Sigmoid colon (tissue), 7 donors: ENCODE measurements at regions of chr5 and their contacts with region 1.

Region 1: DNA sequence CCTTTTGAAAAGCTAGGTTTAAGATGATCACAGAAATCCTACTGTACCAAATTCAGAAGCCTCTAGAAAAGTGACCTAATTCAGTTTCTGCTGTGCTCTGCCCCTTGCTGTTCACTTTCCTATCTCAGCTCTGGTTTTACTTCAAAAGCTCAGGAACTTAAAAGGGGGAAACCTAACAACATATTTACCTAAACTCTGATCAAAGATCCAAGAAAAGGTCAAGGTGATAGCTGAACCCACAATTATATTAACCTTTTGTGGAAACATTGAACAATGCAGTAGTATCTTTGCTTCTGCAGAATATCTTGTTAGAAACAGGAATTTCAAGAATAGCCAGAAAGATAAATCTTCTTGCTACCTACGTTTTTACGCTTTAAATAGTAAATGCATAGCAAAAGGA is 568.5 kb downstream of the PDE4D start:
- DNase-seq: no peak
- H3K4me3 ChIP-seq: no peak overlapping the region
- H3K27ac ChIP-seq: no peak overlapping the region
- H3K4me1 ChIP-seq: peaks cover 0 to 55% (median 39%) of the 10 kb centered on the region in 4 donors
- H3K27me3 ChIP-seq: no peaks in the 10 kb centered on the region
- CTCF ChIP-seq: no peak
- EP300 ChIP-seq: no peak
- POLR2A ChIP-seq: no peak

Region 2: GRCh38 chr5:59312223-59312622 is 12.8 kb before region 1 on chr5:
- intact Hi-C with region 1: no loop called
- DNase-seq: no peak
- H3K4me3 ChIP-seq: no peak overlapping the region
- H3K27ac ChIP-seq: peak overlapping the region in 1 of 4 donors; percentile 29
- H3K4me1 ChIP-seq: peaks cover 0 to 46% (median 38%) of the 10 kb centered on the region in 4 donors
- H3K27me3 ChIP-seq: no peaks in the 10 kb centered on the region
- CTCF ChIP-seq: no peak
- EP300 ChIP-seq: no peak
- POLR2A ChIP-seq: no peak

Region 3: DNA sequence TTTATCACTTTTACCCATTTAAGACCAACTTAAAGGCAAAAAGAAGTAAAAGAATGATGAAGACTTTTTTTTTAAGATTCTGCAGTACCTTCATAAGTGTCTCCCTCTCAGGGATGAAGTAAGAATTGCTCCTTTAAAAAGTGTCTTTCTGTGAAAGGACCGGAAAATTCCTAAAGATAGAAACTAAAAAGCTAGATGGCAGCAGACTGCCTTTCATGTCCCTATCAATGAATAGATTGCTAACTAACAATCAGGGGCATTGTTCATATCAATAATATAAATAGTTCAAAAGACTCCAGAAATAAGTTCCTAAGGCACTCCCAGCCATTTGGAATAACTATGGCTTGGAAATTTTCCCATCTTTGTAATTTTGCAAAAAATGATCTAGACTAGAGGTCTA is 10.5 kb after region 1 on chr5:
- intact Hi-C with region 1: loop called (anchors 2 kb)
- DNase-seq: no peak
- H3K4me3 ChIP-seq: no peak overlapping the region
- H3K27ac ChIP-seq: no peak overlapping the region
- H3K4me1 ChIP-seq: peaks cover 0 to 3% (median 0%) of the 10 kb centered on the region in 4 donors
- H3K27me3 ChIP-seq: no peaks in the 10 kb centered on the region
- CTCF ChIP-seq: no peak
- EP300 ChIP-seq: no peak
- POLR2A ChIP-seq: no peak

Region 4: GRCh38 chr5:59608745-59609144 is 283.7 kb after region 1 on chr5:
- intact Hi-C with region 1: no loop called
- DNase-seq: no peak
- H3K4me3 ChIP-seq: no peak overlapping the region
- H3K27ac ChIP-seq: no peak overlapping the region
- H3K4me1 ChIP-seq: peaks cover 0 to 22% (median 20%) of the 10 kb centered on the region in 4 donors
- H3K27me3 ChIP-seq: no peaks in the 10 kb centered on the region
- CTCF ChIP-seq: no peak
- EP300 ChIP-seq: no peak
- POLR2A ChIP-seq: no peak